Activated CD8-positive, alpha-beta memory T cell treated with anti-CD3 and anti-CD28 coated beads, Interleukin-2, amount 10 ng/mL, durations not matched to agents 7 days and 5 days (primary cell): ENCODE measurements at regions of chr5 and their contacts with region 1.

Region 1: GRCh38 chr5:178859625-178860531 is at the start of gene ZNF354B:
- DNase-seq: peak; percentile 89
- ATAC-seq: peak; percentile 97
- H3K4me3 Mint-ChIP-seq: peak within 1 kb of the TSS; percentile 78
- H3K27ac Mint-ChIP-seq: peak within 1 kb of the TSS; percentile 58
- H3K4me1 Mint-ChIP-seq: peaks cover 13% of the 10 kb centered on the region
- H3K27me3 Mint-ChIP-seq: no peaks in the 10 kb centered on the region
- total RNA-seq, gene ZNF354B: 9.2 to 15.2 TPM

Region 2: GRCh38 chr5:178732281-178732680 is 127.6 kb before region 1 on chr5:
- CTCF ChIA-PET with region 1: interaction called, 15 read pairs
- DNase-seq: no peak
- ATAC-seq: no peak
- H3K4me3 Mint-ChIP-seq: no peak overlapping the region
- H3K27ac Mint-ChIP-seq: no peak overlapping the region
- H3K4me1 Mint-ChIP-seq: peaks cover 8% of the 10 kb centered on the region
- H3K27me3 Mint-ChIP-seq: no peaks in the 10 kb centered on the region

Region 3: DNA sequence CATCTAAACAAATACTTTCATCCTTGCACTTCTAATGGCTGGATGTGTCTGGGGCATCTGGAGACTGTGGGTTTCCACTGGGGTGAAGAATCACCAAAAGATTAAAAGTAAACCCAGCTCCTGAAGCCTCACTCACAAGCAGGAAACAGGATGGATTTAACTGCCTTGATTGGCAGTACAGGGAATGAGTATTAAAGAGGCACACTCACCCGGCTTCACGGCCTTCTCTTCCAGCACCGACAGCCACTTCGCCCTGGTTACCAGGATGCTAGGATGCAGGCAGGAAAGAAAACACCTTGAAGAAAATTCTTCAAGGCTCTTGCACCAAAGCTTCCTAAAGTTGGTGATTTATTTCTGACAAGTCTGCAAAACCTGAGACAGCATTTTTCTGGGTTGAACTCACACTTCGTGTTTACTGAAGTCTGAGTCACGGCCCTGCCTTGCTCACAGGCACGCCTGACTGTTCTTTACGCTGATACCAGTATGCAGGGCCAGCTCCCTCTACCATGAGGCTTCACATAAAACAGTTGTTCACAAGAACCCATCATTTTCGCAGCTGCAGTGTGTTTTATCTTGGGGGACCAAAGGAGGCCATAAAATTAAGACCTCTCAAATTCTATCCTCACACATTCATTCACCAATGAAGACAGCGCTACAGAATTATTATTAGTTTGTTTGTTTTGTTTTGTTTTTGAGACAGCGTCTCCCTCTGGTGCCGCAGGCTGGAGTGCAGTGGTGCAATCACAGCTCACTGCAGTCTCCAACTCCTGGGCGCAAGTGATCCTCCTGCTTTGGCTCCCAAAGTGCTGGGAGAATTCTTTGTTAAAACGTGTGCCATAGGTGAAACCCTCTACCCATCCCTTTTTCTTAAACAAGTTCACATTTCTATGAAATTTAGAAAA is 72.8 kb before region 1 on chr5:
- CTCF ChIA-PET with region 1: no interaction called
- DNase-seq: no peak
- ATAC-seq: no peak
- H3K4me3 Mint-ChIP-seq: no peak overlapping the region
- H3K27ac Mint-ChIP-seq: no peak overlapping the region
- H3K4me1 Mint-ChIP-seq: no peaks in the 10 kb centered on the region
- H3K27me3 Mint-ChIP-seq: no peaks in the 10 kb centered on the region